Mammary epithelial cell (primary cell): ENCODE measurements at regions of chr1 and their contacts with region 1.

Region 1: GRCh38 chr1:99315305-99315704 is 51.0 kb downstream of the PLPPR4 start:
- DNase-seq: no peak
- H3K4me3 ChIP-seq: no peak overlapping the region
- H3K27ac ChIP-seq: no peak overlapping the region
- H3K4me1 ChIP-seq: no peaks in the 10 kb centered on the region
- H3K27me3 ChIP-seq: no peaks in the 10 kb centered on the region
- CTCF ChIP-seq: no peak

Region 2: GRCh38 chr1:98839840-98840239 is 475.5 kb before region 1 on chr1:
- CTCF ChIA-PET with region 1: no interaction called
- dilution Hi-C with region 1: no loop called
- in situ Hi-C with region 1: no loop called
- intact Hi-C with region 1: no loop called
- DNase-seq: no peak
- H3K4me3 ChIP-seq: no peak overlapping the region
- H3K27ac ChIP-seq: no peak overlapping the region
- H3K4me1 ChIP-seq: no peaks in the 10 kb centered on the region
- H3K27me3 ChIP-seq: peaks cover 2% of the 10 kb centered on the region
- CTCF ChIP-seq: no peak

Region 3: DNA sequence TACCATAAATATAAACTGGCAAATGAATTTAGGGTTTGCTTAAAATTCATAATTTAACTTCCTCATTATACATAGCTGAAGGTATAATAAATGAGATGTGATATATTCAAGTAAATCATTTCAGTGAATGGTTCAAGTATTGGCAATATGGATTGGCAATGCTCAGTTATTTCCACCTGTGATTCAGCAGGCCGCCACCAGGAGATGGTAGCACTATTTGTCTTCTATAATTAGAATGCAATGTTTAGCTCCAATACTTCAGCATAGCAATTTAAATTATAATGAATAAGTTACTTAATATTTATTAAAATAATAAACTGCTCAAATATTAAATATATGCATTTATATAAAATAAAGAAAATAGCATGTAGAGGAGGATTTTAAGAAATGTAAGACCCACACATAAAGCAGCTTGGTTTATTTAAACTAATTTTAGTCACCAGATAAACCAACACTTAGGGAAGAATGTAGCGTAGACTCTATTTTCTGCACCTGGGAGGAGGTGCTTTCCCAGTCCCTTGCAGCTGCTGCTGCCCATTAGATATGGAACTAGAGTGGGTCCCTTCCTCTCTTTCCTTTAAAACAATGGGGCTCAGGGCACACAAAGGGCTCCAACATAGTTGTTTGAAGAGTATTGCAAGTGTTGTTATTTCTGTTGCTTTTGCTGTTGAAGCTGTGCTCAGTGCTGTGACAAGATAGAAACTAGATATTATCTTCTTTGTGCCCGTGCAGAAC is 11.1 kb after region 1 on chr1:
- CTCF ChIA-PET with region 1: no interaction called
- dilution Hi-C with region 1: no loop called
- in situ Hi-C with region 1: no loop called
- intact Hi-C with region 1: loop called (anchors 1 kb)
- DNase-seq: no peak
- H3K4me3 ChIP-seq: no peak overlapping the region
- H3K27ac ChIP-seq: no peak overlapping the region
- H3K4me1 ChIP-seq: no peaks in the 10 kb centered on the region
- H3K27me3 ChIP-seq: no peaks in the 10 kb centered on the region
- CTCF ChIP-seq: peak; percentile 47 to 62